ENCODE measurements at regions of chr12 and their contacts with region 1.

Region 1: DNA sequence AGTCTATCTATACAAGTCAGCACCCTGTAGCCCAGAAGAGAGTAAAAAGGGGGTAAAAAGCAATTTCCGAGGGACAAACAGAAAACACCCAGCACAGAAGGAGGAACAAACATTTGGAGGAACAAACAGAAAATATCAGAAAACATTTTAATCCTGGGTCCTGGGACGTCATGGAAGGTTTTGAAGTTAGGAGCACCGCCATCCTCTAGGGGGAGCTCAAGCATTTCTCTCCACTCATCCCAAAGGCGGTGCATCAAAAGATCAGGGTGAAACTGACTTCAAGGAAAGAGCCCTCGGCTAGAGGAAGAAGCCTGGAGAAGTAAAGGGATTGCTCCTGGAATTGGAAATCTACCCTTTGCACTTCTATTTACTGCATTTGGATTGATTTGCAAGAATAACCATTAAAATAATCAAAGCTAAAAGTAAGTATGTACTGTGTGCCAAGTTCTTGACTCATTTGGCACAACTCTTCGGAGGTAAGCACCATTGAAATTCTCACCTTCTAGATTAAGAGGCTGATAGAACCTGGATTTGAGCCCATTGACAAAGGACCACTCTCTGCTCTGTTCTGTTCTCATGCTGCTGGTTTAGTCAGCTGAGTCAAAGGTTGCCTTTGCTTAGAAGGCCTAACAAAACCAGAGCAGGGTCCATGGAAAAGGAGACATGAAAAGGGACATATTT is 17.2 kb upstream of the POC1B start:
- DNase-seq: peak; percentile 20 to 75 (median 64)
- ATAC-seq: peak; percentile 91
- H3K4me3 ChIP-seq: no peak overlapping the region
- H3K4me3 Mint-ChIP-seq: peak overlapping the region in 1 of 10 donors; percentile 36
- H3K27ac ChIP-seq: no peak overlapping the region
- H3K27ac Mint-ChIP-seq: peak overlapping the region in 1 of 9 donors; percentile 3
- H3K4me1 ChIP-seq: no peaks in the 10 kb centered on the region
- H3K4me1 Mint-ChIP-seq: peaks cover 5 to 10% (median 6%) of the 10 kb centered on the region in 7 donors
- H3K27me3 ChIP-seq: no peaks in the 10 kb centered on the region
- H3K27me3 Mint-ChIP-seq: peaks cover 0 to 4% (median 0%) of the 10 kb centered on the region in 5 donors

Region 2: GRCh38 chr12:89949457-89950195 is 406.6 kb after region 1 on chr12:
- CTCF ChIA-PET with region 1: interaction called, 8 read pairs
- POLR2A ChIA-PET with region 1: no interaction called
- intact Hi-C with region 1: loop called in 1 of 2 experiments (anchors 1 kb)
- DNase-seq: peak in 7 of 9 donors; percentile 66 to 89 (median 81)
- ATAC-seq: peak; percentile 95
- H3K4me3 ChIP-seq: peak overlapping the region; percentile 2
- H3K4me3 Mint-ChIP-seq: peak overlapping the region in 9 of 10 donors; percentile 1 to 76 (median 64)
- H3K27ac ChIP-seq: peak overlapping the region; percentile 53
- H3K27ac Mint-ChIP-seq: peak overlapping the region in 8 of 9 donors; percentile 62 to 89 (median 76)
- H3K4me1 ChIP-seq: peaks cover 24 to 33% of the 10 kb centered on the region in 2 donors
- H3K4me1 Mint-ChIP-seq: peaks cover 20 to 58% (median 44%) of the 10 kb centered on the region in 7 donors
- H3K27me3 ChIP-seq: no peaks in the 10 kb centered on the region
- H3K27me3 Mint-ChIP-seq: no peaks in the 10 kb centered on the region

Region 3: DNA sequence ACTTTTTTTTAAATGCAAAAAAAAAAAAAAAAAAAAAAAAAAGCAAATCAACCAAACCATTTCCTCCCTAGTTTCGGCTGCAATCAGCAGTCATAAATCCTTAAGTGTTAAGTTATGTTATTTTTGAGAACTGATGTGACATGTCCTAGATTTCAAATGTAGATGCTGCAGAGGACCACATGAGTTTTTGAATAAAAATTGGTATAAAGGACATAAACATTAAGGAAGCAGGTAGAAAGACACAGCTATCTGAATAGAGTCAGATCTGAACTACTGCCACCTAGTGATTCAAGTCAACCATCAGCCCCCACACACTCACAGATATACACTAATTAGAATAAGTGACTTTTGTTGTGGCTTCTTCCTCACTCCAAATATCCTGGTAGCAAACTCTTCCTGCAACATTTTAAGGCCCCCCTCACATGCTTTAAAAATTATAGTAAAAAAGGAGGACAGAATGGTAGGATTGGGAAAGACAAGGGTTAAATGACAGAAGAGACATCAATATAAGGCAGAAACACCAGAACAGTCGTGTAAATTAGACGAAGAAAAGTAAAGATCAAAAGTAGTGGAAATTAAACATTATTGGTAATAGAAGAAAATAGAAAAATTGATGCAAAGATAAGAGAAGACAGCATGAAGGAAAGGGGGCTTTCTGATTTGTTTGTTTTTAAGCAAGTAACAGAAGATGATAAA is 560.1 kb after region 1 on chr12:
- CTCF ChIA-PET with region 1: interaction called, 57 read pairs
- POLR2A ChIA-PET with region 1: interaction called, 3 read pairs
- intact Hi-C with region 1: loop called (anchors 1 kb)
- DNase-seq: peak in 6 of 9 donors; percentile 17 to 56 (median 44)
- ATAC-seq: peak; percentile 79
- H3K4me3 ChIP-seq: no peak overlapping the region
- H3K4me3 Mint-ChIP-seq: peak overlapping the region in 8 of 10 donors; percentile 47 to 75 (median 70)
- H3K27ac ChIP-seq: no peak overlapping the region
- H3K27ac Mint-ChIP-seq: peak overlapping the region in 4 of 9 donors; percentile 38 to 63 (median 48)
- H3K4me1 ChIP-seq: no peaks in the 10 kb centered on the region
- H3K4me1 Mint-ChIP-seq: peaks cover 4 to 12% (median 6%) of the 10 kb centered on the region in 7 donors
- H3K27me3 ChIP-seq: no peaks in the 10 kb centered on the region
- H3K27me3 Mint-ChIP-seq: peaks cover 4 to 15% (median 11%) of the 10 kb centered on the region in 5 donors

Region 4: DNA sequence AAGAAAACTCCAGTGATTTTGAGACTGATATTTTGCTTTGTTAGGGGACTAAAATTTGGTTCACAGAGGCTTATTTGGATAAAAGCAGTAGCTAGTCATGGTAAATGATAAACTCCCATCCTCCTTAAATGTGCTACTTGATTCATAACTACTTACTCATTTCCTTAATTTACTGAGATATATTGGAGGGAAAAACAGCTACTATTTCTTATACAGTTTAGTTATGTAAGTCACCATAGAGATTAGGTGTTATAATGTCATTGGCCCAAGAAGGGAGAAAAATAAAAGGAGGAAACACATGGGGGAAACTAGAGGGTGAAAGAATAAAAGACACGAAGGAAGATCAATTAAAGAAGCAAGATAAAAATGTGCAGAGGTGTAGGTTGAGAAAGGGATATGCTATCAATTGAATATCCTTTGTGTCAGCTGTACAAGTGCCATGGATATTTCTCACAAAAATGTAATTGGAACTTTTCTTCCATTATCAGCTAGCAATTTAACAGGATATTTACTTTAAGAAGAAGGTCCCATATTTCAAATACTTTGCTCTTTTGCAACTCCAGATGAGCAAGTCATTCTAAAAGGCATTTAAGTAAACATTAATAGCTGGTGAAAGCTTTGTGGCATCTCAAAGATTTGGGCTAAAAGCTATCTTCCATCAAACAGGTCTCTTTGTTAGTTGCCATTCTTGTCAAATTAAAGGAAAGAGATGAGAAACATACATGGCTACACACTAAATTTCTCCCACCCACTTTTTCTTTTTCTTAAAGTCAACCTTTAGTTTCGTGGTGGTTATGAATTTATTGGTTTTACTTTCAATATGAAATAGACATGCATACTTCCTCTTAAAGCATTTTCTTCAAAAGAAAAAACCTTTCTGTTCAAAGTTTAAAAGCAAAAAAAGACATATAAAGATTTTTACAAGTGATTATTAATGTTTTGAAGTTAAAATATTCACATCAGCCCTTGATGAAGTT is 972.4 kb after region 1 on chr12:
- CTCF ChIA-PET with region 1: no interaction called
- POLR2A ChIA-PET with region 1: no interaction called
- intact Hi-C with region 1: loop called in 1 of 2 experiments (anchors 10 kb)
- DNase-seq: no peak
- ATAC-seq: no peak
- H3K4me3 ChIP-seq: no peak overlapping the region
- H3K4me3 Mint-ChIP-seq: peak overlapping the region in 1 of 10 donors; percentile 20
- H3K27ac ChIP-seq: no peak overlapping the region
- H3K27ac Mint-ChIP-seq: no peak overlapping the region
- H3K4me1 ChIP-seq: peaks cover 0 to 4% of the 10 kb centered on the region in 2 donors
- H3K4me1 Mint-ChIP-seq: peaks cover 0 to 7% (median 0%) of the 10 kb centered on the region in 7 donors
- H3K27me3 ChIP-seq: no peaks in the 10 kb centered on the region
- H3K27me3 Mint-ChIP-seq: peaks cover 0 to 7% (median 2%) of the 10 kb centered on the region in 5 donors

Region 5: GRCh38 chr12:90940872-90941499 is 1397.9 kb after region 1 on chr12:
- CTCF ChIA-PET with region 1: no interaction called
- POLR2A ChIA-PET with region 1: no interaction called
- intact Hi-C with region 1: loop called (anchors 2 to 5 kb)
- DNase-seq: peak in 1 of 9 donors; percentile 14
- ATAC-seq: no peak
- H3K4me3 ChIP-seq: no peak overlapping the region
- H3K4me3 Mint-ChIP-seq: no peak overlapping the region
- H3K27ac ChIP-seq: no peak overlapping the region
- H3K27ac Mint-ChIP-seq: no peak overlapping the region
- H3K4me1 ChIP-seq: no peaks in the 10 kb centered on the region
- H3K4me1 Mint-ChIP-seq: peaks cover 0 to 2% (median 0%) of the 10 kb centered on the region in 7 donors
- H3K27me3 ChIP-seq: no peaks in the 10 kb centered on the region
- H3K27me3 Mint-ChIP-seq: peaks cover 5 to 13% (median 5%) of the 10 kb centered on the region in 5 donors

Measured in naive thymus-derived CD4-positive, alpha-beta T cell (primary cell).